HepG2 (cell line): ENCODE measurements at regions of chr3 and their contacts with region 1.

Region 1: DNA sequence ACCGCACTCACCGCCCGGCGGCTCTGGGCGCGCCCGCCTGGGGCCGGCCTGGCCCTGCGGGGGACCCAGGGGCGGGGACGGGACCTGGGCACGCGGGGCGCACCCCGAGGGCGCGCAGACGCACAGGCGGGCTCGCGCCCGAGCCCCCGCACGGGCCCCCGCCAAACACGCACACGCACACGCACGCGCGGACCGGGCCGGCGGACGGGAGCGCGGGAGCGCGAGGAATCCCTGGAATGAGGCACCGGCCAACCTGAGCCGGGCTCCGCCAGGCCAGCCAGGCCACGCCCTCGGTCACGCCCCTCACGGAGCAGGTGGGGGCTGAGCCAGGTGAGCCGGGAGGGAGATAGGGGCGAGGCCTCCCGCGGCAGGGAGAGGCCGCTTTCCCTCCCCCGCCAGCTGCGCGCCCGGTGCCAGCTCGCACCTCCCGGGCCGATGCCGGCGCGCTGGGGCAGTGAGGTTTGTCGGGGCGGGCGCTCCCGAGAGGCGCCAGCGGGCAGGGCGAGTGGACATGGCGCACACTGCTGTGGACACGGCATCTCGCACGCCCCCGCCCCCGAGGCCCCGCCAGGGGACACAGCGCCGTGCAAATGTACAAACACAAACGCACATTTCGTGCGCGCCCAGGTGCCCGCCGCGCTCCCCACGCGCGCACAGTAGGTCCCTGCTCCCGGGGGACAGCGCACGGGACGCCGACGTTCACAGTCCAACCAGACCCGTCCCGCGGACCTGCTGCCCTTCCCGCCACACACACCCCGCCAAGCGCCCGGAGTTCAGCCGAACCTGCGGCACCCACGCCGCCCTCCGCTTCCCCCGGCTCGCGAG is 75.9 kb upstream of the VGLL4 start:
- DNase-seq: peak; percentile 73
- ATAC-seq: peak; percentile 80
- H3K4me3 ChIP-seq: peak overlapping the region; percentile 88 to 95 (median 92)
- H3K27ac ChIP-seq: peak overlapping the region; percentile 61
- H3K4me1 ChIP-seq: peaks cover 36% of the 10 kb centered on the region
- H3K27me3 ChIP-seq: peaks cover 0 to 13% of the 10 kb centered on the region in 2 experiments; a peak in 2 of 5 replicates
- CTCF ChIP-seq: no peak
- EP300 ChIP-seq: no peak
- POLR2A ChIP-seq: no peak
- RAD21 ChIP-seq: no peak

Region 2: DNA sequence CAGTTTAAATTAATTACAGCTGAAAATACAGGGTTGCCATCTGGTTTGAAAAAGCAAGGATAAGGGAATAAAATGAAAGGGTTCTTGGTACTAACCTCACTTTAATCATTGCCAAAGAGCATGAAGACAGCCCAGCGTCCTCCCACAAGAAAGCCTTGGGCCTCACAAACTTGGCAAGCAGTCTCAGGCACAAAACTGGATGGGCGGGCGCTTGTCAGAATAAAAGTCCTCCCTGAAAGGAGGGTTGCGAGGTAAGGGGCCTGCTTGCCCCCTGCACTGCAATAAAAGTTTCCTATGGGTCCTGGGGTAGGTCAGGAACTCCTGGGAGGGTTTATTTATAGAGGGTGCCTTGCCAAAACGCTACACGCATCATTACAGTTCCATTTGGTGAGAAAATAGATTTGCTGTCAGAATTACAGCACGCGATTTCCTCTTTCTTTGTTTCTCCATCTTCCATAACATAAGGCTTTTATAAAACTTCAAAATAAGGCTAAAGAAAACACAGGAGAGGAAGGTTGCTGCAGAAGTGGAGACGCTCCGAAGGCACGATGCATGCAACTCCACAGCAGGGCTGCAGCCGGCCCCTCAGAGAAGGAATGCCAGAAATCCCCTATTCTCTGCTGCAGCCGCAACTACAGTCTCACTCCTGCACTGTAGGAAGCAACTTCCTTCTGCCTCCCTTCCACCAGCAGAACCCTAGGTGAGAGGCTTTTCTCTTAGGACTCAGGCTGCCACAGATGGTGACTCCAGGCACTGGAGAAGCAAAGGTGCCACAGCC is 137.2 kb before region 1 on chr3:
- CTCF ChIA-PET with region 1: no interaction called
- POLR2A ChIA-PET with region 1: no interaction called
- in situ Hi-C with region 1: no loop called
- intact Hi-C with region 1: no loop called
- DNase-seq: no peak
- ATAC-seq: no peak
- H3K4me3 ChIP-seq: no peak overlapping the region
- H3K27ac ChIP-seq: no peak overlapping the region
- H3K4me1 ChIP-seq: peaks cover 36% of the 10 kb centered on the region
- H3K27me3 ChIP-seq: no peaks in the 10 kb centered on the region
- CTCF ChIP-seq: no peak
- EP300 ChIP-seq: no peak
- POLR2A ChIP-seq: no peak
- RAD21 ChIP-seq: no peak

Region 3: DNA sequence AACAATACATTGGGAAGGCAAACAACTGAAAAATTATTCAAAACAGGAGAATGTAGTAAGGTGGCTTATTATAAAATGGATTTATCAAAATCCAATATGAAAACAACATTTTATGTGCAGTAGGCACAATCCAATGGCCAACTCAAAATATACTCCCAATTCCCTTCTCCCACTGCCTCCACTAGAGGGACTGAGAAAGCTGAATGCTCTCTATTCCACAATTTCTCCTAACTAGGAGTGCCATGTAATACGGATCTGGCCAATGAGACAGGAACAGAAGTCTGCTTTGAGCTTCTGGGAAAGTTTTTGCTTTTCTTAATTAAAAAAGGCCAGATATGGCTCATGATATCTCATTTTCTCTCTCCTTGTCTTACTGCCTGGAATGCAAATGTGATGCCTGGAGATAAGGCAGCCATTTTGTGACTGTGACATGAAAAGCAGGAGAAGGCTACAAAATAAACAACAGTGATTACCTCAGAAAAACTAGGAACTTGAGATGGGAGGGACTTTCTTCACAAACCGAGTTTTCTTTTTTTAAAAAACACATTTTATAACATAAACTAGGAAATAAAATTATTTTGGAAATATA is 57.1 kb before region 1 on chr3:
- CTCF ChIA-PET with region 1: no interaction called
- POLR2A ChIA-PET with region 1: interaction called, 4 read pairs
- in situ Hi-C with region 1: no loop called
- intact Hi-C with region 1: loop called (anchors 5 kb)
- DNase-seq: peak; percentile 29
- ATAC-seq: peak; percentile 73
- H3K4me3 ChIP-seq: no peak overlapping the region
- H3K27ac ChIP-seq: no peak overlapping the region
- H3K4me1 ChIP-seq: peaks cover 10% of the 10 kb centered on the region; the same call in 1 of the 2 replicates
- H3K27me3 ChIP-seq: no peaks in the 10 kb centered on the region
- CTCF ChIP-seq: 0 out of 2 replicates have a peak, but pooled peaks have one; percentile 27
- EP300 ChIP-seq: no peak
- POLR2A ChIP-seq: no peak
- RAD21 ChIP-seq: no peak

Region 4: DNA sequence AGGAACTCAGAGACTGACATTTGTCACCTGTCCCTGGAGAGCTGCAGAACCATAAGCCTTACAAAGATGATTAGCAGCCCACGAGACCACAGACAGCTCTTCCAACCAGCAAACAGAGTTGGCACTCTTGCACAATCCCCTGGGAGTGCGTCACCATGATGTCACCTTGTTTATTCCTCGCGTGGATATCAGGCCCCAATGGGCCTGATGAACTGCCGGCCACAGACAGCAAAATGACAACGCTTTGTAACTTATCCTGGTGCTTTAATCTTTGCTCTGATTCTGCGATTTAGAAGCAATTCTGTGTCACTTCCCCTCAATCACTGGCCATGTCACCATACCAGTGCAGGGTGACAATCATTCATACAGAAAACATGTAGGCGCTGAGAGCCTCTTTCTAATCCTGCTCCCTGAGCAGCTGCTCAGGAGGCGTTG is 37.8 kb after region 1 on chr3:
- CTCF ChIA-PET with region 1: no interaction called
- POLR2A ChIA-PET with region 1: no interaction called
- in situ Hi-C with region 1: no loop called
- intact Hi-C with region 1: no loop called
- DNase-seq: no peak
- ATAC-seq: no peak; the same call in 1 of the 3 replicates
- H3K4me3 ChIP-seq: no peak overlapping the region
- H3K27ac ChIP-seq: no peak overlapping the region
- H3K4me1 ChIP-seq: no peaks in the 10 kb centered on the region
- H3K27me3 ChIP-seq: peaks cover 0 to 17% of the 10 kb centered on the region in 2 experiments; a peak in 3 of 5 replicates
- CTCF ChIP-seq: no peak
- EP300 ChIP-seq: no peak
- POLR2A ChIP-seq: no peak
- RAD21 ChIP-seq: no peak

Region 5: DNA sequence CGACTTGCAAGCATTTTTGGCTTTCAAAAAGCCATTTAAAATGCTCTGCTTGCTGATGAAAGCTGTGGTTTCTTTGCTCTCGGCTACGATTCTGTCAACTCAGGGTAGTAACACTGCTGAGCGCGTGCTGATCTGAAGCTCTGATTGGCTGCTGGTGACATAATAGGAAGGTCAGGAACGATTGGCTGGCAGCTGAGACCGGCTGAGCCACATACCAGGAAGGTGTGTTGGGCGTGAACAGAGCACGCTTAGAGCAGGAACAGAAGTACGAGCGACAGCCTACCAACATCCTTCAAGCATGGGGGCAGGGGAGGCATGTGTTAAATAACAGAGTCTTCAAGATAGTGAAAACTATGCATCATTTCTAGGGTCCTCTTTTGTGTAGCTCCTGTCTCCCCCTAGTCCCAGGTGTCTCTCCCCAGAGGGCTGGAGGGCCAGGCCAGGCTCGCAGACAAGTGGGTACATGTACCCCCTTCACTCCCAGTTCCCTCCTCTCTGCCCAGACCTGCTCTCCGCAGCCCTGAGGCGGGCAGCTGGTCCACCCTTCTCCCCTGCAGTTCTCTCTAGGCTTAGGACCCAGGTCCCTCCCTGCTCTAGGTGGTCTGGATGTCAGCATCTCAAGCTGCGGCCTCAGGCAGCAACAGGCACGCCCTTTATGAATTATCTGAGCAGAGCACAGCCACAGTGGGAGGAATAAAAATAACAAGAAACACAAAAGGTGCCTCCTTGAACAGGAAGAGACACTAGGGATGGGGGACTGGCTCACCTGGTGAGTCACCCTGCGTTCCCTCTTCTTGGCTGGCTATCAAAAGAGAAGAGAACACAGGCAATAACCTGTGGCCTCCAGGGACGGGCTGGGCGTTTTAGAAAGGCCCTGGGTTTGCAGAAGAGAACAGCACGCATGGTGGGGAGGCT is 51.1 kb after region 1 on chr3:
- CTCF ChIA-PET with region 1: no interaction called
- POLR2A ChIA-PET with region 1: no interaction called
- in situ Hi-C with region 1: no loop called
- intact Hi-C with region 1: loop called (anchors 2 kb)
- DNase-seq: peak; percentile 83
- ATAC-seq: peak; percentile 95
- H3K4me3 ChIP-seq: peak overlapping the region in 2 of 3 experiments; percentile 24 to 64; a peak in 4 of 6 replicates
- H3K27ac ChIP-seq: no peak overlapping the region
- H3K4me1 ChIP-seq: peaks cover 31% of the 10 kb centered on the region
- H3K27me3 ChIP-seq: no peaks in the 10 kb centered on the region
- CTCF ChIP-seq: no peak
- EP300 ChIP-seq: no peak
- POLR2A ChIP-seq: 0 out of 4 replicates have a peak, but pooled peaks of 1 of the 2 experiments have one; percentile 44
- RAD21 ChIP-seq: no peak

Region 6: GRCh38 chr3:11818033-11818432 is 98.4 kb after region 1 on chr3:
- CTCF ChIA-PET with region 1: no interaction called
- POLR2A ChIA-PET with region 1: no interaction called
- in situ Hi-C with region 1: no loop called
- intact Hi-C with region 1: loop called (anchors 5 kb)
- DNase-seq: no peak
- ATAC-seq: no peak
- H3K4me3 ChIP-seq: no peak overlapping the region
- H3K27ac ChIP-seq: no peak overlapping the region
- H3K4me1 ChIP-seq: no peaks in the 10 kb centered on the region
- H3K27me3 ChIP-seq: no peaks in the 10 kb centered on the region
- CTCF ChIP-seq: no peak
- EP300 ChIP-seq: no peak
- POLR2A ChIP-seq: no peak
- RAD21 ChIP-seq: no peak